ENCODE measurements at regions of chr2 and their contacts with region 1.

Region 1: GRCh38 chr2:9178904-9179571 is 27.6 kb upstream of the ASAP2 start:
- DNase-seq: peak; percentile 76
- H3K4me3 ChIP-seq: no peak overlapping the region
- H3K27ac ChIP-seq: peak overlapping the region; percentile 85 to 91 (median 88)
- H3K4me1 ChIP-seq: peaks cover 14 to 35% (median 26%) of the 10 kb centered on the region in 4 donors
- H3K27me3 ChIP-seq: no peaks in the 10 kb centered on the region
- CTCF ChIP-seq: no peak
- EP300 ChIP-seq: no peak
- POLR2A ChIP-seq: no peak

Region 2: GRCh38 chr2:9211496-9211895 is 32.5 kb after region 1 on chr2:
- in situ Hi-C with region 1: no loop called
- intact Hi-C with region 1: loop called (anchors 1 kb)
- DNase-seq: no peak
- H3K4me3 ChIP-seq: no peak overlapping the region
- H3K27ac ChIP-seq: peak overlapping the region; percentile 93 to 97 (median 95)
- H3K4me1 ChIP-seq: peaks cover 22 to 80% (median 52%) of the 10 kb centered on the region in 4 donors
- H3K27me3 ChIP-seq: no peaks in the 10 kb centered on the region
- CTCF ChIP-seq: no peak
- EP300 ChIP-seq: no peak
- POLR2A ChIP-seq: no peak

Region 3: GRCh38 chr2:9333591-9334171 is 154.6 kb after region 1 on chr2:
- in situ Hi-C with region 1: loop called in 2 of 4 experiments (anchors 25 kb)
- intact Hi-C with region 1: no loop called
- DNase-seq: peak; percentile 72
- H3K4me3 ChIP-seq: no peak overlapping the region
- H3K27ac ChIP-seq: peak overlapping the region; percentile 52 to 87 (median 84)
- H3K4me1 ChIP-seq: peaks cover 24 to 79% (median 27%) of the 10 kb centered on the region in 4 donors
- H3K27me3 ChIP-seq: no peaks in the 10 kb centered on the region
- CTCF ChIP-seq: peak; percentile 57 to 78 (median 67)
- EP300 ChIP-seq: no peak
- POLR2A ChIP-seq: no peak

Measured in transverse colon (tissue), 4 donors.